ENCODE measurements at regions of chr12 and their contacts with region 1.

Region 1: GRCh38 chr12:46675736-46676135 is 150.1 kb downstream of the SLC38A4 start:
- DNase-seq: no peak
- H3K4me3 ChIP-seq: no peak overlapping the region
- CTCF ChIP-seq: peak; percentile 1

Region 2: DNA sequence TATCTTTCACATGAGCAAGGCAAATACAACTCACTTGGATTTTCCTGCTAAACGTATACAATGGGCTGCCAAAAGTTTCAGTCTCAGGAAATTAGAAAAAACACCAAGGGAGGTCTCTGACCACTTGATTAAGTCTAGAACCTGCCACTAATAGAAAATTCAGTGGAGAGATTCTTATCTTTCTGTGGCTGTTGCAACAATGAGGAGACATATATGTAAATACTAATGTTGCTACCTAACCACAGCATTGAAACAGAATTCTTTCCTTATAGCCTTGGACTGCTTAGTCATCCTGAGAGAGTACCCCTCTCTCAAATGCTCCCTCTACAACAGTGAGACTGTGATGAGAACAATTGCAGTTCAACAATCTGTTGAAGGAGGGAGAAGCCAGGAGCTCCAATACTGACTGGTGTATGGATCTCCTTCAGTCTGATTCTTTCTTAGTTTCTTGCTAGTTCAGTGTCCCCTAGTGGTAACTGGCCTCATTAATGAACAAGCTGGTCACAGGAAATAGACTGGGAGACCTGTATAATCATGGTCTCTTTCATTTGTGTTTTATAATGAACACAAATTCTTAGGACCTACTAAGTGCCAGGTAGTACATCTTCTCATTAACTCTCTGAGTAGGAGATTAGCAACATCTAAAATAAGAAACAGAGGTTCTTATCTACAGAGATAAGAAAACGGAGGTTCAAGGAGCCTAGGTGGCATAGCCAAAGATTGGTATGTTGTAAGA is 14.5 kb before region 1 on chr12:
- CTCF ChIA-PET with region 1: interaction called, 13 read pairs
- POLR2A ChIA-PET with region 1: interaction called, 3 read pairs
- DNase-seq: peak; percentile 67
- H3K4me3 ChIP-seq: no peak overlapping the region
- CTCF ChIP-seq: peak; percentile 67

Measured in AG04449 (cell line).